ENCODE measurements at regions of chr16 and their contacts with region 1.

Region 1: GRCh38 chr16:58336332-58337089 is 41.7 kb upstream of the PRSS54 start:
- DNase-seq: peak; percentile 79 to 99
- H3K4me3 ChIP-seq: peak overlapping the region in 1 of 4 experiments; percentile 18; a peak in 1 of 8 replicates
- H3K27ac ChIP-seq: no peak overlapping the region
- H3K4me1 ChIP-seq: peaks cover 0 to 7% (median 5%) of the 10 kb centered on the region in 4 experiments; a peak in 5 of 7 replicates
- H3K27me3 ChIP-seq: no peaks in the 10 kb centered on the region
- CTCF ChIP-seq: peak; percentile 91 to 97 (median 94)
- EP300 ChIP-seq: 0 out of 3 replicates have a peak, but pooled peaks of 1 of the 2 experiments have one; percentile 18
- POLR2A ChIP-seq: no peak
- RAD21 ChIP-seq: peak; percentile 89 to 91

Region 2: GRCh38 chr16:57994778-57995177 is 341.7 kb before region 1 on chr16:
- CTCF ChIA-PET with region 1: no interaction called
- POLR2A ChIA-PET with region 1: no interaction called
- DNase-seq: no peak
- H3K4me3 ChIP-seq: no peak overlapping the region
- H3K27ac ChIP-seq: no peak overlapping the region
- H3K4me1 ChIP-seq: peaks cover 4 to 12% (median 7%) of the 10 kb centered on the region in 4 experiments; a peak in 6 of 7 replicates
- H3K27me3 ChIP-seq: peaks cover 0 to 3% (median 0%) of the 10 kb centered on the region in 4 experiments; a peak in 2 of 7 replicates
- CTCF ChIP-seq: peak; percentile 64 to 67 (median 64)
- EP300 ChIP-seq: no peak
- POLR2A ChIP-seq: no peak
- RAD21 ChIP-seq: peak; percentile 52 to 67

Region 3: DNA sequence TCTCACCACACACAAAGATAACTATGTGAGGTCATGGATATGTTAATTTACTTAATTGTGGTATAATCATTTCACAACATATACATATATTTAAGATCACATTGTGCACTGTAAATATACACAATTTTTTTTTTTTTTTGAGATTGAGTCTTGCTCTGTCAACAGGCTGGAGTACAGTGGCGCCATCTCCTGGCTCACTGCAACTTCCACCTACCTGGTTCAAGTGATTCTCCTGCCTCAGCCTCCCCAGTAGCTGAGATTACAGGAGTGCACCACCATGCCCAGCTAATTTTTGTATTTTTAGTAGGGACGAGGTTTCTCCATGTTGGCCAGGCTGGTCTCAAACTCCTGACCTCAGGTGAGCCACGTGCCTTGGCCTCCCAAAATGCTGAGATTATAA is 30.2 kb before region 1 on chr16:
- CTCF ChIA-PET with region 1: interaction called, 66 read pairs
- POLR2A ChIA-PET with region 1: no interaction called
- DNase-seq: no peak
- H3K4me3 ChIP-seq: no peak overlapping the region
- H3K27ac ChIP-seq: no peak overlapping the region
- H3K4me1 ChIP-seq: no peaks in the 10 kb centered on the region
- H3K27me3 ChIP-seq: no peaks in the 10 kb centered on the region
- CTCF ChIP-seq: peak; percentile 27 to 44 (median 42); a peak in 3 of 4 replicates
- EP300 ChIP-seq: no peak
- POLR2A ChIP-seq: no peak
- RAD21 ChIP-seq: peak; percentile 32 to 42; a peak in 2 of 4 replicates

Region 4: GRCh38 chr16:58462997-58463941 is 126.8 kb after region 1 on chr16:
- CTCF ChIA-PET with region 1: interaction called, 11 read pairs
- POLR2A ChIA-PET with region 1: no interaction called
- DNase-seq: peak in 1 of 2 experiments; percentile 70
- H3K4me3 ChIP-seq: peak overlapping the region; percentile 54 to 79 (median 60)
- H3K27ac ChIP-seq: no peak overlapping the region
- H3K4me1 ChIP-seq: peaks cover 0 to 19% (median 7%) of the 10 kb centered on the region in 4 experiments; a peak in 6 of 7 replicates
- H3K27me3 ChIP-seq: peaks cover 27 to 54% (median 48%) of the 10 kb centered on the region in 4 experiments
- CTCF ChIP-seq: no peak
- EP300 ChIP-seq: no peak
- POLR2A ChIP-seq: no peak
- RAD21 ChIP-seq: no peak

Region 5: GRCh38 chr16:58487566-58488351 is 151.2 kb after region 1 on chr16:
- CTCF ChIA-PET with region 1: interaction called, 67 read pairs
- POLR2A ChIA-PET with region 1: interaction called, 7 read pairs
- DNase-seq: peak; percentile 93 to 96
- H3K4me3 ChIP-seq: peak overlapping the region in 2 of 4 experiments; percentile 7 to 23; a peak in 2 of 8 replicates
- H3K27ac ChIP-seq: no peak overlapping the region
- H3K4me1 ChIP-seq: peaks cover 0 to 4% (median under 1%) of the 10 kb centered on the region in 4 experiments; a peak in 2 of 7 replicates
- H3K27me3 ChIP-seq: no peaks in the 10 kb centered on the region; a peak in 2 of 7 replicates
- CTCF ChIP-seq: peak; percentile 97 to 99 (median 98)
- EP300 ChIP-seq: no peak
- POLR2A ChIP-seq: no peak
- RAD21 ChIP-seq: peak; percentile 97 to 98

Region 6: GRCh38 chr16:58494981-58495520 is 158.5 kb after region 1 on chr16:
- CTCF ChIA-PET with region 1: interaction called, 30 read pairs
- POLR2A ChIA-PET with region 1: interaction called, 7 read pairs
- DNase-seq: peak in 1 of 2 experiments; percentile 79
- H3K4me3 ChIP-seq: peak overlapping the region in 2 of 4 experiments; percentile 2 to 21; a peak in 1 of 8 replicates
- H3K27ac ChIP-seq: peak overlapping the region; percentile 82
- H3K4me1 ChIP-seq: peaks cover 0 to 22% (median 13%) of the 10 kb centered on the region in 4 experiments; a peak in 6 of 7 replicates
- H3K27me3 ChIP-seq: peaks cover 0 to 3% (median 1%) of the 10 kb centered on the region in 4 experiments; a peak in 3 of 7 replicates
- CTCF ChIP-seq: peak; percentile 51 to 84 (median 51)
- EP300 ChIP-seq: peak in 1 of 2 experiments; percentile 76; a peak in 1 of 3 replicates
- POLR2A ChIP-seq: no peak
- RAD21 ChIP-seq: peak in 1 of 2 experiments; percentile 33; a peak in 2 of 4 replicates

Region 7: DNA sequence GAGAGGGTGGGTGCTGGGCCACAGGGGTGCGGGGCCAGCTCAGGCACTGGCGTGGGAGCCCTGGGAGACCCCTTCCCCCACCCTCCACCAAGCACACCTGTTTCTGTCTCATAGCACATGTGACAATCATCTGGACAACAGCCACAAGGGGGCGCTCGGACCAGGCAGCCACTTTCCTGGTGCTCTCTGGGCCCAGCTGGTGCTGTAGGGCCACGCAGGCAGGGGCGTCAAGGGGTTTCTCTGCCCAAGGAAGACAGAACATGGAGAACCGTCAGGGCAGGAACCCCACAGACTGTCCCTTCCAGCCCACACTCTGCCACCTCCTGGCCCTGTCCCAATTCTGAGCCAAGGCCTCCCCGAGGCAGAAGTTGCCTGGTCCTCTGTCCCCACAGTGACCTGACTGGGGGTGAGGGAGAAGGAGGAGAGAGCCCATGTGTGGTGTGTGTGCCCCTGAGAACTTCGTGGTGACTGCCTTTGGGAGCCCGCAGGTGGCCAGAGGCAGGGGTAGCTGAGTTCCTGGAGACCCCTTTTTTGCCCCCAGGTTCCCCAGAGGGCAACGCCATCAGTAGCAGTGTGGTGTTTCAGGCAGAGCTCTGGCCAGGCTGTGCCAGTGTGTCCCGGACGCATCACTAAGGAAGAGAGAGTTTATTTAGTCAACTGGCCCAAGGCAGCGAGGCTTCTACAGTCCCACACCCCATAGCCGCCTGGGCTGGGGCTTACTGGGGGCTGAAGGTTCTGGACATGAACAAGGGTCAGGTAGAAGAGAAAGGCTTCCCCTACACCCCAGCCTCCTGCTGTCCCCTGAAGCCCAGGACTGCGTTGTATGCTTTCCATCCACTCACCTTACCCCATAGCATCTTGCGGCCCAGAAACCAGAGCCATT is 175.7 kb after region 1 on chr16:
- CTCF ChIA-PET with region 1: interaction called, 15 read pairs
- POLR2A ChIA-PET with region 1: interaction called, 3 read pairs
- DNase-seq: peak; percentile 62 to 96
- H3K4me3 ChIP-seq: no peak overlapping the region
- H3K27ac ChIP-seq: no peak overlapping the region; the same call in 1 of the 2 replicates
- H3K4me1 ChIP-seq: peaks cover 4 to 15% (median 6%) of the 10 kb centered on the region in 4 experiments
- H3K27me3 ChIP-seq: no peaks in the 10 kb centered on the region
- CTCF ChIP-seq: peak; percentile 89 to 95 (median 91)
- EP300 ChIP-seq: no peak
- POLR2A ChIP-seq: peak in 1 of 2 experiments; percentile 47; a peak in 1 of 3 replicates
- RAD21 ChIP-seq: peak; percentile 59 to 70